Tibial artery (tissue), 4 donors: ENCODE measurements at regions of chr18 and their contacts with region 1.

Region 1: DNA sequence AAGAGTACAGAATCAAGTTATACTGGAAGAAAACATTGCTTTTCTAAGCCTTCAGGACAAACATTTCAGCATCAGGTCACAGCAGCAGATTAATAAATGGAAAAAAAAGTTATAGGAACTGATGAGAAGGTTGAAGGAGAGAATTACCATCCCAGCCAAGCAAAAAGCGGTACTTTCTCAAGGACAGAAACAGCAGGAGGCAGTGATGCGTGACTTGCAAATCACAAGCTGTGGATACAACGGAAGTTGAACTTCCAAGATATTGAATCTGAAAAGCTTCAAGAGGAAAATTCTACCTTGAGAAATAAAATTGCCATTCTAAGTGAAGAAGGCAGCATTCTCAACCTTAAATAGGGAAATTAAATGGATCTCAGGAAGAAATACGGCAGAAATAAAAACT is 18.5 kb upstream of the SERPINB12 start:
- DNase-seq: no peak
- H3K4me3 ChIP-seq: no peak overlapping the region
- H3K27ac ChIP-seq: no peak overlapping the region
- H3K4me1 ChIP-seq: no peaks in the 10 kb centered on the region
- H3K27me3 ChIP-seq: no peaks in the 10 kb centered on the region
- CTCF ChIP-seq: no peak

Region 2: DNA sequence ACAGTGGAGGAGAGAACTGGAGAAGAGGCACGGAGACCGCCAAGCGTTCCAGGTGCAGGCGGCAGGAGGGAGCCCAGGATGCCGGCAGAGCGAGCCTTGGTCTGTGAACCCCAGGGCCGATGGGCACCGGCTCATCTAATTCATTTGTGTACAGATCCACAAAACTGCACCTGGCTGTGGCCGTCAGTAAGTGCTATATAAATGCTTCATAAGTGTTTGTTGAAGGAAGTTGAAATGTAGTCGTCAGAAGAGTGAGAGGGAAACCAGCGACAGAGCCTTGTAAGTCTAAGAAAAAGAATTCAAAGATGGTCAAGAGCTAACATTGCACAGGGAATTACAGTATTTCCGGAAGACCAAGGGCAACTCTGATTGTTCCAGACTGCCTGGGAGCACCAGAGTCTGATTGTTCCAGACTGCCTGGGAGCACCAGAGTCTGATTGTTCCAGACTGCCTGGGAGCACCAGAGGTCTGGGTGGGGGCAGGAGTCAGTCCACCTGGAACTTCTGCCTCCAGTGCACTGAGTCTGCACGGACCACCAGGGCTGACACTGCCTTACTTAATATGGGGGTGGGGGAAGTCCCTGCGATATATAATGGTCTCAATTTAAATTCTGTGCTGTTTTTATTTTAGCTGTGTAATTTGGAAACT is 316.4 kb before region 1 on chr18:
- intact Hi-C with region 1: no loop called
- DNase-seq: no peak
- H3K4me3 ChIP-seq: no peak overlapping the region
- H3K27ac ChIP-seq: no peak overlapping the region
- H3K4me1 ChIP-seq: peaks cover 0 to 35% (median 21%) of the 10 kb centered on the region in 4 donors
- H3K27me3 ChIP-seq: no peaks in the 10 kb centered on the region
- CTCF ChIP-seq: no peak

Region 3: DNA sequence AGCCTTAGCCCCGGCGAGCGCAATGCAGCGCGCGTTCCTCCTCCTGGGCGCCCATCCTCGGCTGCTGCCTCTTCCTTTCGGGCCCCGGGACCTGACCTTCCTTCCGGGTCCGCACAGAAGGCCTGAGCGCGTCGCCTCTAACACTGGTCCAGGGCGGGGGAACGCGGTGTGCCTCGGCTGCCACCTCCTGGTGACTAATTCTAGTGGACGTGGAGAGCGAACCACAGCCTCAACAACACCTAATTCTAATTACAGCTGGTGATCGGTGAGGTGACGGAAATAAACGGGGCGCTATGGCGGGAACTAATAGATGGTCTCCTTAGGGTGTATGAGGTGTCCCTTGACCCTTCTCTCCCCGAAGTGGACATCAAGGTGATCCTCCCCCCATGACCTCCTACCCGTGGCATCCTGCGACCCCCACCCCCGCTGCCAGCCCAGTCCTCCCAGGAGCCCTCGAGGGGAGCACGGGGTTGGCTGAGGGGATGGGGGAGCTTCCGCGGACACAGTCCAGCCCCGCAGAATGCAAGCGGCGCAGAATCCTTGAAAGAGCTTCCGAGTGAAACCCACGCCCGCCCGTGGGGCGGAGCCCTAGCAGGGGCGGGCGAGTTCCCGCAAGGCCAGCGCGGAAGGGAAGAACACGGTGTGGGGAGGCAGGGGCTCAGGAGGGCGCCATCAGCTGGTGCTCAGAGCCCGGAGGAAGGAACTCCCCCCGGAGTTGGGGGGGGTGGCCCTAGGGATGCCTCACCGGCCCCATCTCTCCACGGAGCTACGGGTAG is 412.7 kb after region 1 on chr18:
- intact Hi-C with region 1: loop called (anchors 10 kb)
- DNase-seq: peak; percentile 82 to 85
- H3K4me3 ChIP-seq: peak overlapping the region; percentile 47 to 61
- H3K27ac ChIP-seq: no peak overlapping the region
- H3K4me1 ChIP-seq: peaks cover 0 to 12% (median 8%) of the 10 kb centered on the region in 4 donors
- H3K27me3 ChIP-seq: peaks cover 0 to 23% of the 10 kb centered on the region in 2 donors
- CTCF ChIP-seq: peak; percentile 48 to 66